MCF 10A (cell line): ENCODE measurements at regions of chr1 and their contacts with region 1.

Region 1: GRCh38 chr1:151059078-151059907 is at the start of gene CDC42SE1:
- DNase-seq: peak; percentile 85
- H3K4me3 Mint-ChIP-seq: peak within 1 kb of the TSS; percentile 82
- H3K27ac Mint-ChIP-seq: peak within 1 kb of the TSS; percentile 92
- H3K4me1 Mint-ChIP-seq: peaks cover 61% of the 10 kb centered on the region
- H3K27me3 Mint-ChIP-seq: no peaks in the 10 kb centered on the region
- CTCF ChIP-seq: peak; percentile 91
- total RNA-seq, gene CDC42SE1: 134 and 139 TPM in 2 replicates

Region 2: GRCh38 chr1:151070474-151071276 is 11.4 kb after region 1 on chr1 and contains the start of gene GABPB2:
- CTCF ChIA-PET with region 1: interaction called, 18 read pairs
- POLR2A ChIA-PET with region 1: interaction called, 67 read pairs
- intact Hi-C with region 1: loop called (anchors 1 kb)
- DNase-seq: peak; percentile 98
- H3K4me3 Mint-ChIP-seq: peak within 1 kb of the TSS; percentile 100
- H3K27ac Mint-ChIP-seq: peak within 1 kb of the TSS; percentile 100
- H3K4me1 Mint-ChIP-seq: no peaks in the 10 kb centered on the region
- H3K27me3 Mint-ChIP-seq: no peaks in the 10 kb centered on the region
- CTCF ChIP-seq: peak; percentile 99
- total RNA-seq, gene GABPB2: 20.2 and 22.9 TPM in 2 replicates

Region 3: GRCh38 chr1:151839457-151840405 is 780.4 kb after region 1 on chr1 and contains the start of gene C2CD4D:
- CTCF ChIA-PET with region 1: no interaction called
- POLR2A ChIA-PET with region 1: no interaction called
- intact Hi-C with region 1: no loop called
- DNase-seq: peak; percentile 84
- H3K4me3 Mint-ChIP-seq: peak within 1 kb of the TSS; percentile 85
- H3K27ac Mint-ChIP-seq: peak within 1 kb of the TSS; percentile 91
- H3K4me1 Mint-ChIP-seq: peaks cover 41% of the 10 kb centered on the region
- H3K27me3 Mint-ChIP-seq: no peaks in the 10 kb centered on the region
- CTCF ChIP-seq: no peak
- total RNA-seq, gene C2CD4D: not detected in 2 replicates